ENCODE measurements at regions of chr7 and their contacts with region 1.

Region 1: DNA sequence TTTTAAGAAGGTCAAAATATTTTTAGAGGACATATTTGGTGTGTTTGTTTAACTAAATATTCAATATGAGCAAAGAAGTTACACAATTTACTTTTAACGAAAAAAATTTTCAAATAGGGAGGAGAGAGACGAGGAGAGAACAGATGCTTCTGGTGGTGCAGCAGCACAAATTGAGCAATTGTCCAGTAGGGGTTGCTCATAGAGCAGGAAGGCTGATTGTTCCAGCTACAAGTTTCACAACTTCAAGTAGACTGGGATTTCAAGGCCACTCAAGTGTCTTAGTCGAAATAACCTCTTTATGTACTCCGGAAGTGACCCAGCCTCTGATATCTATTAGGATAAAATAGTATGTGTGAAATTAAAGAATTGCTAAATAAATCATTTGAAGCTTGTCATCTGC is 197.9 kb downstream of the HDAC9 start:
- DNase-seq: peak; percentile 25
- H3K4me3 ChIP-seq: no peak overlapping the region
- H3K27ac ChIP-seq: peak overlapping the region in 1 of 2 experiments; percentile 95; a peak in 2 of 4 replicates
- H3K4me1 ChIP-seq: peaks cover 0 to 45% of the 10 kb centered on the region in 2 experiments; a peak in 3 of 4 replicates
- H3K27me3 ChIP-seq: no peaks in the 10 kb centered on the region
- CTCF ChIP-seq: peak; percentile 97
- EP300 ChIP-seq: peak in 1 of 2 experiments; percentile 46; a peak in 1 of 4 replicates
- RAD21 ChIP-seq: peak; percentile 99

Region 2: GRCh38 chr7:18590744-18591340 is 102.6 kb before region 1 on chr7:
- CTCF ChIA-PET with region 1: interaction called, 23 read pairs
- POLR2A ChIA-PET with region 1: no interaction called
- DNase-seq: peak; percentile 62
- H3K4me3 ChIP-seq: no peak overlapping the region
- H3K27ac ChIP-seq: peak overlapping the region in 1 of 2 experiments; percentile 50; a peak in 3 of 4 replicates
- H3K4me1 ChIP-seq: peaks cover 0 to 2% of the 10 kb centered on the region in 2 experiments; a peak in 1 of 4 replicates
- H3K27me3 ChIP-seq: no peaks in the 10 kb centered on the region
- CTCF ChIP-seq: peak; percentile 96
- EP300 ChIP-seq: no peak
- RAD21 ChIP-seq: peak; percentile 96

Region 3: GRCh38 chr7:18680576-18680975 is 12.8 kb before region 1 on chr7:
- CTCF ChIA-PET with region 1: interaction called, 16 read pairs
- POLR2A ChIA-PET with region 1: no interaction called
- DNase-seq: no peak
- H3K4me3 ChIP-seq: no peak overlapping the region
- H3K27ac ChIP-seq: peak overlapping the region; percentile 10 to 40; a peak in 1 of 4 replicates
- H3K4me1 ChIP-seq: peaks cover 4 to 10% of the 10 kb centered on the region in 2 experiments; a peak in 3 of 4 replicates
- H3K27me3 ChIP-seq: no peaks in the 10 kb centered on the region
- CTCF ChIP-seq: no peak
- EP300 ChIP-seq: peak in 1 of 2 experiments; percentile 25; a peak in 1 of 4 replicates
- RAD21 ChIP-seq: no peak

Region 4: GRCh38 chr7:18831419-18831818 is 138.0 kb after region 1 on chr7:
- CTCF ChIA-PET with region 1: interaction called, 15 read pairs
- POLR2A ChIA-PET with region 1: no interaction called
- DNase-seq: no peak
- H3K4me3 ChIP-seq: no peak overlapping the region
- H3K27ac ChIP-seq: peak overlapping the region in 1 of 2 experiments; percentile 100; a peak in 2 of 4 replicates
- H3K4me1 ChIP-seq: peaks cover 26 to 46% of the 10 kb centered on the region in 2 experiments
- H3K27me3 ChIP-seq: no peaks in the 10 kb centered on the region
- CTCF ChIP-seq: no peak
- EP300 ChIP-seq: no peak
- RAD21 ChIP-seq: no peak

Region 5: GRCh38 chr7:18890134-18890533 is 196.7 kb after region 1 on chr7:
- CTCF ChIA-PET with region 1: interaction called, 21 read pairs
- POLR2A ChIA-PET with region 1: interaction called, 19 read pairs
- DNase-seq: peak; percentile 52
- H3K4me3 ChIP-seq: no peak overlapping the region
- H3K27ac ChIP-seq: peak overlapping the region; percentile 54 to 100
- H3K4me1 ChIP-seq: peaks cover 17 to 57% of the 10 kb centered on the region in 2 experiments; a peak in 3 of 4 replicates
- H3K27me3 ChIP-seq: no peaks in the 10 kb centered on the region
- CTCF ChIP-seq: no peak
- EP300 ChIP-seq: peak; percentile 96 to 100
- RAD21 ChIP-seq: peak; percentile 52

Region 6: GRCh38 chr7:18993933-18994668 is 300.7 kb after region 1 on chr7:
- CTCF ChIA-PET with region 1: interaction called, 23 read pairs
- POLR2A ChIA-PET with region 1: no interaction called
- DNase-seq: peak; percentile 37
- H3K4me3 ChIP-seq: peak overlapping the region in 1 of 2 experiments; percentile 33; a peak in 2 of 4 replicates
- H3K27ac ChIP-seq: peak overlapping the region; percentile 93 to 99
- H3K4me1 ChIP-seq: peaks cover 25 to 48% of the 10 kb centered on the region in 2 experiments; a peak in 3 of 4 replicates
- H3K27me3 ChIP-seq: no peaks in the 10 kb centered on the region
- CTCF ChIP-seq: no peak
- EP300 ChIP-seq: peak; percentile 73 to 96
- RAD21 ChIP-seq: peak; percentile 24; the same call in 1 of the 2 replicates

Region 7: GRCh38 chr7:19101909-19102308 is 408.5 kb after region 1 on chr7:
- CTCF ChIA-PET with region 1: interaction called, 28 read pairs
- POLR2A ChIA-PET with region 1: interaction called, 30 read pairs
- DNase-seq: no peak
- H3K4me3 ChIP-seq: peak overlapping the region; percentile 25 to 49; a peak in 3 of 4 replicates
- H3K27ac ChIP-seq: peak overlapping the region; percentile 79 to 96
- H3K4me1 ChIP-seq: peaks cover 9 to 92% of the 10 kb centered on the region in 2 experiments; a peak in 3 of 4 replicates
- H3K27me3 ChIP-seq: no peaks in the 10 kb centered on the region
- CTCF ChIP-seq: no peak
- EP300 ChIP-seq: no peak
- RAD21 ChIP-seq: no peak; the same call in 1 of the 2 replicates